ENCODE measurements at regions of chr3 and their contacts with region 1.

Region 1: GRCh38 chr3:142433110-142433509 is 14.7 kb downstream of the XRN1 start:
- DNase-seq: no peak
- ATAC-seq: peak; percentile 80
- H3K4me3 ChIP-seq: no peak overlapping the region
- H3K27ac ChIP-seq: no peak overlapping the region
- H3K4me1 ChIP-seq: no peaks in the 10 kb centered on the region
- H3K27me3 ChIP-seq: no peaks in the 10 kb centered on the region
- CTCF ChIP-seq: no peak
- EP300 ChIP-seq: no peak
- POLR2A ChIP-seq: no peak
- RAD21 ChIP-seq: no peak

Region 2: GRCh38 chr3:142447852-142448823 is 15.0 kb after region 1 on chr3 and contains the start of gene XRN1:
- CTCF ChIA-PET with region 1: interaction called, 4 read pairs
- POLR2A ChIA-PET with region 1: interaction called, 11 read pairs
- RAD21 ChIA-PET with region 1: no interaction called
- SMC1A ChIA-PET with region 1: interaction called, 5 read pairs
- in situ Hi-C with region 1: no loop called
- intact Hi-C with region 1: loop called (anchors 2 kb)
- DNase-seq: peak; percentile 57
- ATAC-seq: peak; percentile 94
- H3K4me3 ChIP-seq: peak within 1 kb of the TSS; percentile 87
- H3K27ac ChIP-seq: peak within 1 kb of the TSS; percentile 97
- H3K4me1 ChIP-seq: no peaks in the 10 kb centered on the region
- H3K27me3 ChIP-seq: no peaks in the 10 kb centered on the region
- CTCF ChIP-seq: no peak
- EP300 ChIP-seq: no peak
- POLR2A ChIP-seq: peak; percentile 93
- RAD21 ChIP-seq: no peak
- polyA plus RNA-seq, gene XRN1: 1.7 to 7.5 TPM

Region 3: DNA sequence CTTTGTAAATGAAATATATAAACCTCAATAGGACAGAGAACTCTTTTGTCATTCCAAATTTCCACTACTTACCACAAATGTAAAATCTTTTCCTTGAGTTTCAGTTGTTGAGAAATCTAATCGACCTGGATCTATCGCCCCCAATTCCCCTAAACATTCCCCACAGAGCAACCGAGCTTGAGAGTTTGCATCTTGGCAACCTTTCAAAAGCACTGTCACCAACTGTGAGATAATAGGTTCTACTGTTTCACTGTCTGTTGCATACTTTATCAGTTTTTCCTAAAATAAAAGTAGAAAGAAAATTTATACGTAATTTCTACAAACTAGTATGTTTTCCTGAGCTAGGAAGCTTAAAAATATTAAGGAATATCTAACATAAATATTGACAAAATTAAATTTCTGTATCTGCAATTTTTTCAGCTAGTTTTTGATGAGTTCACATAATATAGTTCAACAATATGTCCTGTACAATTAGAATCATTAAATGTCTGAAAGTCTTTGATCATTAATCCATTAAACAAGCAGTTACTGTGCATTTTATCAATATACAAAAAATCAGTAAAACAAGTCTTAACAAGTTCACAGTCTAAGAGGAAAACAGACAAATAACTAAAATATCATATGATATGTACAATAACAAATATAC is 90.9 kb after region 1 on chr3:
- CTCF ChIA-PET with region 1: no interaction called
- POLR2A ChIA-PET with region 1: no interaction called
- RAD21 ChIA-PET with region 1: no interaction called
- SMC1A ChIA-PET with region 1: no interaction called
- in situ Hi-C with region 1: no loop called
- intact Hi-C with region 1: no loop called
- DNase-seq: no peak
- ATAC-seq: no peak
- H3K4me3 ChIP-seq: no peak overlapping the region
- H3K27ac ChIP-seq: no peak overlapping the region
- H3K4me1 ChIP-seq: no peaks in the 10 kb centered on the region
- H3K27me3 ChIP-seq: no peaks in the 10 kb centered on the region
- CTCF ChIP-seq: no peak
- EP300 ChIP-seq: no peak
- POLR2A ChIP-seq: no peak
- RAD21 ChIP-seq: no peak

Measured in GM12878 (cell line).